GM10248 (cell line): ENCODE measurements at regions of chr10 and their contacts with region 1.

Region 1: DNA sequence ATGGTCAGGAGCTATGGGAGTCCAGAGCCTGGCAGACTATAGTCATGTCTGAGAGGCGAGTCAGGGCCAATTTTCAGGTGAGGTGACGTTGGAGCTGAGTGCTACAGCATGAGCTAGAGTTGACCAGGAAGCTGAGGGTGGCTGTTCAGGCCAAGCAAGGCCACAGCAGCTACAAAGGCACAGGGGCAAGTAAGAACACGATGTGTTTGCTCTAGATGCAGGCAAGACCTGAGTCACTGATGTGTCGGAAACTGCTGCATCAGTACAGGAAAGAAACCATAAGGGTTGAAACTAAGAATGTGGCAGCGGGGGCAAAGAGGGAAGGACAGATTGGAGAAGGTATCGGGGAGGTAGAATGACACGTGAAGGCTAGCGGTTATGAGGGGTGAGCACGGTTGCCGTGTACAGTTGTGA is 11.8 kb upstream of the RRP12 start:
- DNase-seq: no peak
- CTCF ChIP-seq: no peak

Region 2: DNA sequence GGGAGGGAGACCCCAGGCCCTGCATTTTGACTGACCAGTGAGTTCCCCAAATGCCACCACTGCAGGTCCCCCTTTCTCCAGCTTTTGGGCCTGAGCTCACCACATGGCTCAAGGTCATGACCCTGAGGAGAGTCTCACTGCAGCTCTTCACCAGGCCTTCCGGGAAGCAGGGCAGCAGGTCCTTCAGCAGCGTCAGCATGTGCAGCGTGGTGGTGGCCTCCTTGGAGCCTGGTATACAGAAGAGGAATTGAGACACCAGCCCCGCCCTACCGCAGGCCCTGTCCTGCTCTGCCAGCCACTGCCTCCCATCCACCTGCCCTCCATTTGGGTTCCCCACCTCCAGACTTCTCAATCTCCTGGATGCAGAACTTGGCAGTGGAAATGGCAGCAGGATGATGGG is 24.7 kb before region 1 on chr10:
- CTCF ChIA-PET with region 1: no interaction called
- POLR2A ChIA-PET with region 1: no interaction called
- DNase-seq: no peak
- CTCF ChIP-seq: no peak

Region 3: DNA sequence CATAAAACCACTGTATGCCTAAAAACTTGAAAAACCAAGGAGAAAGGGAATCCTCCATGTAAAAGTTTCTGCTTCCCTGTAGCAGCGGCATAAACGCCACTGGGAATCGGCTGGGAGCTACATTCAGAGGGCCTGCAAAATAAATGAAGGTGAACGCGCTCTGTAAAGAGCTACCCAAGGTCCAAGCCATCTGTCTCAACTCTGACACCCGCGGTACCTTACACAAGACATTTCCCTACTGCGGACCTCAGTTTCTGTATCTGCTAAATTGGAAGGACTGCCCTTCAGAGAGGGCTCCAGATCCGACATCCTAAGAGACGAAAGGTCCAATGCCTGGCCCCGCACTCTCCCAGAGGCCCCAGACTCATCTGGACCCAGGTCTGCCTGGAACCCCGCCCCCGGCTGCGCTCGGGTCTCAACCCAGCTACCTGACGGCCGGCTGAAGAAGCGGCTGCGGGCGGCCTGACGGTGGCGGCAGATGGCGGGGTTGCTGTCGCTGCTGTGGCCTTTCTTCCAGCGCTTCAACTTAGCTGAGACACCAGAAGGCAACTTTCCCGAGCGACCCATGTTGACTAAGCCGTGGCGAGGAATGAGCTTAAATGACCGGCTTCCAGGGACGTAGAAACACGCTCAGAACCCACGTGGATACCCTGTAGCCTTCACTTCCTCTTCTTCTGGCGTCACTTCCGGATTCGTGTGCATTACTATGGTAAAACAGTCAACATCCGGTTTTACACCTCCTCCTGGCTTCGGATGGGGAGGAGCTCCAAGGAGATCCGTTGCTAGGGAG is 12.0 kb before region 1 on chr10 and contains the start of gene RRP12:
- CTCF ChIA-PET with region 1: interaction called, 62 read pairs
- POLR2A ChIA-PET with region 1: interaction called, 9 read pairs
- DNase-seq: peak; percentile 97
- CTCF ChIP-seq: no peak

Region 4: DNA sequence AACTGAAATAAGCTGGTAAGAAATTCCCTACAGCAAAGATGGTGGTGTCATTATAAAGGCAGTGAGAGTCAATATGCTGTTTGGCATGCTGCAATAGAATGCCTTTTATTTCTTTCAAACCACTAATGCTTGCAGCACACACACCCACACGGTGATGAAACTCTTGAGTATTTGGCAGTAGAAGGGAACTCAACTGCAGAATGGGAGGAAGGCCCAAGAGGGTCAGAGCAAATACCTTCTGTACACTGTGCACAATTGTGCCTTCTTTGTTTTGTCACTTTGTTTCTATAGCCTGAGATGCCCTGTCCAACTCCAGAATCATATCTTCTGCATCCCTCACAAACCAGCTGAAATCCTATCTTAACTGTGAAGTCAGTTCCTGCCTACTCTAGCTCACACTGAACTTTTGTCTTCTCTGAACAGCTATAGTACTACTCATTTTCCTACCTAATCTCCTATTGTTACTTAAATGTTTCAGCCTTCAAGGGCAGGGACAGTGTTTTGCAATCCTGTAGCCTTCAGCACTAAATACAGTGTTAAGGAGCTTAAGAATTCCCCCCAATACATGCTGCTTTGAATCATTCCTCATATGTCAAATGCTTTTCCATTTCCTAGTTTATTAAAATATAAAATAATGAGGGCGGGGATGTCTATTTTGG is 63.2 kb after region 1 on chr10:
- CTCF ChIA-PET with region 1: no interaction called
- POLR2A ChIA-PET with region 1: no interaction called
- DNase-seq: no peak
- CTCF ChIP-seq: no peak

Region 5: DNA sequence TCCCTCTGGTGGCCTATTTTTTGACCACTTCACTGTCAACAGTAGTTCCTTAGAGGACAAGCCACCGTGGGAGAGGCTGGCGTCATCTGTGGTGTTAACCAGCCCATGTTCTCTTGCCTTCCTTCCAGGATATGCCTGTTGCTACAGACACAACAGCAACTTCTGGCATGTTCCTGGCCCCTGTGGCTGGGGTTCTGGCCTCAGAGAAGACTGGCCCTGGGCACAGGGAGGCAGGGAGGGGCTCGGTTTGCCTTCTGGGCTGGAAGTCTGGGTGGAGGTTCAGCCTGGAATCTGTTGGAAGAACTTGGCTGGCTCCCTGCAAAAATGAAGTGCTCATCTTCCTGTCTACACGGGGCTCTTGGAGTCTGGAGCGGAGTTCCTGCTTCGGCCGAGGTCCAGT is 462.5 kb after region 1 on chr10:
- CTCF ChIA-PET with region 1: no interaction called
- POLR2A ChIA-PET with region 1: no interaction called
- DNase-seq: no peak
- CTCF ChIP-seq: no peak